ENCODE measurements at regions of chr16 and their contacts with region 1.

Region 1: DNA sequence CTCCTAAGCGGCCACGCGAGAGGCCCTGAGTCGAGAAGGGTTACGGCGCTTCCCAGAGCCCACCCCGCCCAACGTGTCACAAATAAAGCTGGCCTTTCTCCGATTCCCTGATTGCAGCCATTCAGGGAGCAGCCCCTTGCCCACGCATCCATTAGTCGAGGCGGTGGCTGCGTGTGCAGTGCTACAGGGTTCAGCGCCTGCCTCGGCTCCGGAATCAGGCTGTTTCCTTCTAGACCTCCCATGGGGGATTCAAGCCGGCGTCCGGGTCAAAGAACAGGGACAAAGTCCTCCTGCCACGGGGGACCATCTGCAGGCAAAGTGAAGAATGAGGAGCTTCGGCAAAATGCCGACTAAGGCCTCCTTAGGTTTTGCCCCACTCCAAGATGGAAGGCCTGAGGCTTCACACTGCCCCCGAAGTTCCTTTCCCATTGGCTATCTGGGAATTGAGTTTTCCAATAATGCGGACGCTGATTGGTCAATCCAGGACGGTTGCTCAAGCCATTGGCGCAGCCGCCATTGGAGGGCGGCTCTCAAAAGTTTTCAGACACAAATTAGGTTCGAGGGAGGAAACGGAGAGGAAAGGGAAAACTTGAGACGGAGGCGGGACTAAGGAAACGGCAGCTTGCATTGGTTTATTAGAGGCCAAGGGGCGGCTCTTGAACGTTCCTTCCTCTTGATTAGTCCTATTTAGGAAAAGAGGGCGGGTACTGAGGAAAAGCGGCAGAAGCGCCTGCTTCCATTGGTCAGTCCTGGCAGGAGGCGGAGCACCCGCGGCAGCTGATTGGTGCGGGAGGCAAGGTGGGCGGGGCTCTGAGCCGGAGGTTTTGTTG is 430 bp upstream of the KATNB1 start:
- DNase-seq: peak; percentile 100
- ATAC-seq: peak; percentile 92
- H3K4me3 Mint-ChIP-seq: peak overlapping the region; percentile 98
- H3K27ac Mint-ChIP-seq: peak overlapping the region; percentile 99
- H3K4me1 Mint-ChIP-seq: peaks cover 16% of the 10 kb centered on the region
- H3K27me3 Mint-ChIP-seq: peaks cover 3% of the 10 kb centered on the region; the same call in 1 of the 2 replicates
- CTCF ChIP-seq: no peak

Region 2: DNA sequence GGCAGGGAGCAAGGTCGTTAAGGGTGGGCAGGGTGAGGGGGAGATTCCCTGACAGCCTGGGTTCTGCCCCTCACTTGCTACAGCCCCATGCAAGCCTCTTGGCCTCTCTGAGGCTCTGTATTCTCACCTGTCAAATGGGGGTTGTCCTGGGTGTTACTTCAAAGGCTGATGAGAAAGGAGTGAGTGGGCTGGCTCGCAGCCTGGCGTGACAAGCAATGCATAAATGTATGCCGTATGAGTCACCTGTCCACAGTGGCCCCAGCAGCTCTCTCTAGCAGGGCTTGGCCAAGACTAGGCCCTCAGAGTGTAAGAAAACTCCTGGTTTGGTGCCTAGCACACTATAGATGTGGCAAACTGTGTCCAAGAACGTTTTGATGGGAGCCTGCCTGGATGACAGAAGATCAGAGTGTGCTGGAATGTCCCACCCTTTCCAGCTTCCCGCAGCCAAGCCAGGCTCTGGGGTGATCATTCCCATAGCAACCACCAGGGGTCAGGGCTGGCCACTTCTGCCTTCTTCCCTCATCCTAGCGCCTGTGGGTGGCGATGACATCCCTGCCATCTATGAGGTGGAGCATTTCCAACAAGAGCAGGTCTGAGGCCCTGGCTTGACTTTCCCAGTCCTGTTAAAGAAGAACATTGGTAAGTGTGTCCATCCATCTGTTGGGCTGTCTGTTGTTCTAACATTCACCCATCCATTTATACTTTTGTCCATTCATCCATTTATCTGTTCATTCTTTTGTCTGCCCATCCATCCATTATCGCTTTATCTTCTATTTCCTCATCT is 143.9 kb before region 1 on chr16:
- CTCF ChIA-PET with region 1: interaction called, 19 read pairs
- POLR2A ChIA-PET with region 1: no interaction called
- DNase-seq: peak; percentile 83
- ATAC-seq: peak; percentile 99
- H3K4me3 Mint-ChIP-seq: no peak overlapping the region
- H3K27ac Mint-ChIP-seq: no peak overlapping the region
- H3K4me1 Mint-ChIP-seq: 0 out of 2 replicates have a peak, but pooled peaks cover 3% of the 10 kb centered on the region
- H3K27me3 Mint-ChIP-seq: peaks cover 28% of the 10 kb centered on the region
- CTCF ChIP-seq: peak; percentile 94

Region 3: GRCh38 chr16:57600048-57600835 is 134.9 kb before region 1 on chr16:
- CTCF ChIA-PET with region 1: interaction called, 17 read pairs
- POLR2A ChIA-PET with region 1: no interaction called
- DNase-seq: peak; percentile 84
- ATAC-seq: peak; percentile 99
- H3K4me3 Mint-ChIP-seq: no peak overlapping the region
- H3K27ac Mint-ChIP-seq: no peak overlapping the region
- H3K4me1 Mint-ChIP-seq: no peaks in the 10 kb centered on the region
- H3K27me3 Mint-ChIP-seq: peaks cover 7% of the 10 kb centered on the region; the same call in 1 of the 2 replicates
- CTCF ChIP-seq: peak; percentile 77

Region 4: DNA sequence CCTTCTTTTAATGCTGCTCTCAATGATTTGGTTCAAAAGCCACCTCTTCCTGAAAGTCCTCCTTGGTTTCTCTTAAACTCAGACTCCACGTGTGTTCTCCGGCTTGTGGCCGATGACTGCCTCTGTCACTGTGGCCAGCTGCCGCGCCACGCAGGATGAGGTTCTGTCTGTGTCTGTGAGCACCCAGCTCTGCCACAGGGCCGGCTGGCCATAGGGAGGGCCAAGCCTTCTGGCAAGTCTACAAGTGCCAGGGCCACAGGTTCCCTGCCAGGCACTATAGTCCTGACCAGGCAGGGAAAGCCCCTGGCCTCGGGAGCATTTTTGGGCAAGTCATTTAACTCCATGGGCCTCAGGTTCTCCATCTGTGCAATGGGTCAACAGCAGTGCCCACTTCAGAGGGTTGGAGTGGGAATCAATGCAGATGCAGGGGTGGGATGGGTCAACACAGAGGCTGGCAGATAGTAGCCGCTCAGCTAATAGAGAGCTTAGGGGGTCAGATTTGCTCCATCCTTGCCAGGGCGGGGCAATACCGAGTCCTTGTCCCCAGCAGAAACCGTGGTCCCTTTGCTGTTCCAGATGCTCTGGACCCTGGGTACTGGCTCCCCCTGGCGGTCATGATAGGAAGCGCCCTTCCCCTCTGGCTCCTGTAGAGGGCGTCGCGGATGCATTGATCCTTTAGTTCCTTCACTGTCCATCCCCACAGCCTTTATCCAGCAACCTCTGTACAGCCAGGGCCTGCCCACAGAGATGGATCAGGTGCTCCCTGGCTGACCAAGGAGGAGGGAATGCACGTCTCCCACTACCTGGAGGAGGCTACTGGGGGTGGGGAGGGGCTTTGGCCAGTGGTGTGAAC is 86.3 kb before region 1 on chr16:
- CTCF ChIA-PET with region 1: interaction called, 10 read pairs
- POLR2A ChIA-PET with region 1: no interaction called
- DNase-seq: peak; percentile 87
- ATAC-seq: peak; percentile 90
- H3K4me3 Mint-ChIP-seq: no peak overlapping the region
- H3K27ac Mint-ChIP-seq: 0 out of 2 replicates have a peak overlapping the region, but pooled peaks have one; percentile 53
- H3K4me1 Mint-ChIP-seq: 0 out of 2 replicates have a peak, but pooled peaks cover 2% of the 10 kb centered on the region
- H3K27me3 Mint-ChIP-seq: no peaks in the 10 kb centered on the region; the same call in 1 of the 2 replicates
- CTCF ChIP-seq: peak; percentile 100

Region 5: GRCh38 chr16:57667526-57668258 is 67.4 kb before region 1 on chr16:
- CTCF ChIA-PET with region 1: interaction called, 15 read pairs
- POLR2A ChIA-PET with region 1: interaction called, 3 read pairs
- DNase-seq: peak; percentile 66
- ATAC-seq: peak; percentile 66
- H3K4me3 Mint-ChIP-seq: no peak overlapping the region
- H3K27ac Mint-ChIP-seq: no peak overlapping the region
- H3K4me1 Mint-ChIP-seq: no peaks in the 10 kb centered on the region
- H3K27me3 Mint-ChIP-seq: no peaks in the 10 kb centered on the region
- CTCF ChIP-seq: 0 out of 2 replicates have a peak, but pooled peaks have one; percentile 28

Region 6: GRCh38 chr16:57795431-57795878 is 60.3 kb after region 1 on chr16:
- CTCF ChIA-PET with region 1: interaction called, 10 read pairs
- POLR2A ChIA-PET with region 1: no interaction called
- DNase-seq: peak; percentile 74
- ATAC-seq: peak; percentile 68
- H3K4me3 Mint-ChIP-seq: no peak overlapping the region
- H3K27ac Mint-ChIP-seq: 0 out of 2 replicates have a peak overlapping the region, but pooled peaks have one; percentile 57
- H3K4me1 Mint-ChIP-seq: peaks cover 40% of the 10 kb centered on the region
- H3K27me3 Mint-ChIP-seq: peaks cover 18% of the 10 kb centered on the region
- CTCF ChIP-seq: peak; percentile 21; the same call in 1 of the 2 replicates